WTC11 (cell line): ENCODE measurements at regions of chr15 and their contacts with region 1.

Region 1: DNA sequence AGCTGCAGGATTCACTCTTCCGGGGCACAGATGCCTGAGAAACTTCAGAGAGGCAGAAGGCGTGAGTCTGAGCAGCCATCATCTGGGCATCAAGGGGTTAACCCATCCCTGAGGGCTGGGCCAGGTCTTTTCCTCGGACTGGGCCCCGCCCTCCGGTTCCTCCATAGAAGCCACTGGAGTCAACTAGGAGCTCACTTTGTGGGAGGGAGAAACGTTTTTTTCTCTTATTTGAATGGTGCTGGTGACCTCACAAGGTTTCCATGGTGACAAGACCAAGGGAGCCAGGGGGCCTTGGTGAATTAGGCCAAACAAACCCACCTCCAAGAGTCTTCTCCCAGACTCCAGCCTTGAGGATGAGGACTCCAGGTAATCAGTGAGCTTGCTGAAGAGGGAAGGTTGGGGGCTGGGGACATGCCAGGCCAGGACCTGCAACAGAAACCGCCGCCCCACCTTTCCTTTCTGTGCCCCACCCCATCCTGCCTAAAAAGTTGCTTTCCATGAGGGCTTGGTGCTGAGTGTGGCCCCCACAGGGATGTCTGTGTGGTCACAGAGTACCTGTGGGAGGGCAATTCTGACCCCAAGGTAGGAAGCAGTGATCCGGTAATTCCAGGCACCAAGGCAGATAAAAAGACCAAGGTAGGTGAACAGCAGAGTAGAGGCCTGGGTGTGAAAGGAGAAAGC is 14.8 kb upstream of the INSYN1 start:
- DNase-seq: peak; percentile 57
- ATAC-seq: peak; percentile 77
- H3K4me3 Mint-ChIP-seq: no peak overlapping the region; the same call in 1 of the 2 replicates
- H3K27ac Mint-ChIP-seq: no peak overlapping the region
- H3K4me1 Mint-ChIP-seq: peaks cover 28% of the 10 kb centered on the region
- H3K27me3 Mint-ChIP-seq: no peaks in the 10 kb centered on the region; the same call in 1 of the 2 replicates
- CTCF ChIP-seq: no peak

Region 2: GRCh38 chr15:73753250-73754130 is 14.5 kb before region 1 on chr15 and contains the start of gene INSYN1:
- CTCF ChIA-PET with region 1: interaction called, 11 read pairs
- POLR2A ChIA-PET with region 1: interaction called, 5 read pairs
- DNase-seq: peak; percentile 42
- ATAC-seq: peak; percentile 68
- H3K4me3 Mint-ChIP-seq: peak within 1 kb of the TSS; percentile 69
- H3K27ac Mint-ChIP-seq: no peak within 1 kb of the TSS
- H3K4me1 Mint-ChIP-seq: peaks cover 27% of the 10 kb centered on the region
- H3K27me3 Mint-ChIP-seq: peaks cover 26% of the 10 kb centered on the region
- CTCF ChIP-seq: no peak
- total RNA-seq, gene INSYN1: 9.0 to 11.9 TPM (median 9.8 TPM) in 3 replicates

Region 3: GRCh38 chr15:73786518-73786917 is 18.6 kb after region 1 on chr15:
- CTCF ChIA-PET with region 1: interaction called, 20 read pairs
- POLR2A ChIA-PET with region 1: interaction called, 4 read pairs
- DNase-seq: peak; percentile 80
- ATAC-seq: peak; percentile 88
- H3K4me3 Mint-ChIP-seq: no peak overlapping the region
- H3K27ac Mint-ChIP-seq: peak overlapping the region; percentile 74
- H3K4me1 Mint-ChIP-seq: peaks cover 57% of the 10 kb centered on the region
- H3K27me3 Mint-ChIP-seq: peaks cover 4% of the 10 kb centered on the region
- CTCF ChIP-seq: no peak